Right ventricle myocardium inferior (tissue), 1 donor: ENCODE measurements at regions of chr2 and their contacts with region 1.

Region 1: GRCh38 chr2:179129574-179130238 is 79.8 kb upstream of the CCDC141 start:
- DNase-seq: no peak
- ATAC-seq: peak; percentile 68

Region 2: GRCh38 chr2:178891265-178891958 is 238.3 kb before region 1 on chr2:
- intact Hi-C with region 1: loop called (anchors 10 kb)
- DNase-seq: no peak
- ATAC-seq: peak; percentile 61

Region 3: GRCh38 chr2:178928077-178928476 is 201.6 kb before region 1 on chr2:
- intact Hi-C with region 1: loop called (anchors 10 kb)
- DNase-seq: no peak
- ATAC-seq: peak; percentile 26

Region 4: DNA sequence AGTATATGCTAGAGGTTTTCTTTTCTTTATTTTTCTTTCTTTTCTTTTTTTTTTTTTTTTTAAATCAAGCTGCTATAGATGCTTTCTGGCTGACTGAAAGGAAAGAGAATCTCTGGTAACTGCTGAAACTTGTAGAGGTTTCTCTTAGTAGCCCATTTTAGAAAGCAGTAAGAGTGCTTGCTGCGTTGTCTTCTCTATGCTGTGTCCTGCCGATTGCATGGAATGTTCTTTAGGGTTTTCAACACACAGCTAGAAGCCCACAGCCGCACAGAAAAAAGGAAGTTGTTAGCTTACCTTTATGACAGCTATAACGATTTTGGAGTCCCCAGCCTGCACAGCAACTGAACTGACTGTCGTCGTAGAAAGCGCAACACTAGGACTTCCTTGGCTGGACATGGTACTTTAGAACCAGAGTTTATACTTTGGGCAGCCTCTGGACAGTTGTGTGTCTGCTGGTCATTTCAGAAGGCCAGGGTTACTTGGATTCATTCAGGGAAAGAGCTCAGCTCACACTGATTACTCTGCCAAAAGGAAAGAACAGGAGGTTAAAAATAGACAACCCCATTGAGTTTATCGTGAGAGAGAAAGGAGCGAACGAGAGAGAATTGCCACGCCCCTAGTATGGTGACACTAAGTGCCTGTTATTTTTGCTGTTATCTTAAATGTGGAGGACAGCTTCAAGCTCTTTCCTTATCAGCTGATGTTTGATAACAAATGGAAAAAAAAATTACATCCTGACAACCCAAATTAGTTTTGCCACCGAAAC is 80.0 kb before region 1 on chr2 and contains the start of gene CCDC141:
- intact Hi-C with region 1: loop called (anchors 5 kb)
- DNase-seq: no peak
- ATAC-seq: peak; percentile 94
- total RNA-seq, gene CCDC141: 116 TPM